GM12878 (cell line): ENCODE measurements at regions of chr9 and their contacts with region 1.

Region 1: DNA sequence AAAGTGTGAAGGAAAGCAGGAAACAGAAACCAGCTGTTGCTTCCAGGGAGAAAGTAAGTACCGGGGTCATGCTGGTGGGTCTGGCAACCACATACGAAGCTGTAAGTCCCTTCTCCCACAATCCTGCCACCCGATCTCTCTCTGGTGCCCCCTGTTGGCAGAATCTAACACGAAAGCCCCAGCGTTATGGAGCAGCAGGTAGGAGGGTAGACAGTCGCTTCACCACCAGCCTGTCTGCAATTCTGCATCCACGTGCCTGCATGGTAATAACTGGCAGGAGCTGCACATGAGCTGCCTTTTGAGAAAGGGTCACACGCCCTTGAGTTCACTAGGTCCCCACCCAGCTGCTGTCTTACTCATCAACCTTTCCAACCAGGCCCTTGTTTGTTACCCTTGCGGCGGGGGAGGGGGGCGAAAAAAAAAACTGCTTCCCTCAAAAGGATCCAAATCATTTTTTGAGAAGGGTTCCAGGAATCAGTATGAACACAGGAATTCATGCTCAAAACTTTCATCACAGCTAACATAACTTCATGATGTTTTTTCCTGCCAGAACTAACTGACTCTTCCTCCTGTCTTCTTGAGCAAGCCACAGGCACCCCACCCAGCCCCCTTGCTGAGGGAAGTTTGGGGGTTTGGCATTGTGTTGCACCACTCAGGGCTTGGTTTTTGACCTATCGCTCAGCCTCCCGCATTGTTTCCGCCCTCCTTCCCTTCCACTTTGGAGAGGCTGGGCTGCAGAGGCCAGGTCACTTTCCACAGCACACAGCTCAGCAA is 19.6 kb upstream of the TMEM252 start:
- DNase-seq: no peak
- ATAC-seq: peak; percentile 83
- H3K4me3 ChIP-seq: no peak overlapping the region
- H3K27ac ChIP-seq: no peak overlapping the region
- H3K4me1 ChIP-seq: no peaks in the 10 kb centered on the region
- H3K27me3 ChIP-seq: peaks cover 4 to 7% of the 10 kb centered on the region in 2 experiments; a peak in 3 of 4 replicates
- CTCF ChIP-seq: peak; percentile 51 to 72 (median 58)
- EP300 ChIP-seq: no peak
- POLR2A ChIP-seq: no peak
- RAD21 ChIP-seq: peak; percentile 54

Region 2: GRCh38 chr9:68446836-68447235 is 113.4 kb before region 1 on chr9:
- CTCF ChIA-PET with region 1: no interaction called
- POLR2A ChIA-PET with region 1: no interaction called
- RAD21 ChIA-PET with region 1: no interaction called
- SMC1A ChIA-PET with region 1: no interaction called
- in situ Hi-C with region 1: no loop called
- intact Hi-C with region 1: loop called (anchors 10 kb)
- DNase-seq: no peak
- ATAC-seq: no peak
- H3K4me3 ChIP-seq: no peak overlapping the region
- H3K27ac ChIP-seq: no peak overlapping the region
- H3K4me1 ChIP-seq: no peaks in the 10 kb centered on the region
- H3K27me3 ChIP-seq: no peaks in the 10 kb centered on the region; a peak in 1 of 4 replicates
- CTCF ChIP-seq: no peak
- EP300 ChIP-seq: no peak
- POLR2A ChIP-seq: no peak
- RAD21 ChIP-seq: no peak

Region 3: DNA sequence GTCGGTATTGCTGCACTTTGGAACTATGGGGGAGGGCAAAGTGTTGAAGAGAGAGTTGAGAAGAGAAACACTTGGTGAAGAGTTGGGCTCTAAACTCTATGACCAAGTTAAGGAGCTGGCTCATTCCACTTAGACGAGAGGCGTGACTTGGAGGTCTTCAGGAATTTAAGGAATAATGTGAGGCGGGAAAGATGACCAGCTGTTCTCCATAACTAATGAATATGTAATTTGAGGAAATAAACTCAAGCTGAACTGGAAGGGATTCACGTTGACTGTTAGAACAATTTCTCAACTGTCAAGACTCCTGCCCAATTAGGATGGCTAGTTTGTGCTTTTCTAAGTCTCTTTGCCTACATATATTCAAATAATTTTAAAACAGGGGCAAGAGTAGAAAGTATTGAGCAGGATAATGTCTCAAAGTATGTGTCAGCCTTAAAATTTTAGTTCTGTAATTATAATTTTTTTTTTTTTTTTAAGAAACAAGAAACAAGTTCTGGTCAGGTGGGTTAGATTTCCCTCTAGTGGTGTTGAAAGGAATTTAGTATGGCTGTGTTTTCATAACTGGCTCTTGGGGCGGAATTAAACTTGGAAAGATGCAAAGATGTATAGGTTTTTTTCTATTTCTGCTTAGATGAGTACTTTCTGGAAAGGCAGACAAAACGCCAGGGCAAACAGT is 53.0 kb before region 1 on chr9:
- CTCF ChIA-PET with region 1: interaction called, 6 read pairs
- POLR2A ChIA-PET with region 1: no interaction called
- RAD21 ChIA-PET with region 1: interaction called, 4 read pairs
- SMC1A ChIA-PET with region 1: interaction called, 4 read pairs
- in situ Hi-C with region 1: loop called (anchors 5 kb)
- intact Hi-C with region 1: loop called (anchors 5 kb)
- DNase-seq: no peak
- ATAC-seq: peak; percentile 39; the same call in 2 of the 3 replicates
- H3K4me3 ChIP-seq: no peak overlapping the region
- H3K27ac ChIP-seq: no peak overlapping the region
- H3K4me1 ChIP-seq: peaks cover 3% of the 10 kb centered on the region; the same call in 1 of the 2 replicates
- H3K27me3 ChIP-seq: no peaks in the 10 kb centered on the region; a peak in 1 of 4 replicates
- CTCF ChIP-seq: peak; percentile 36 to 53 (median 50); a peak in 5 of 6 replicates
- EP300 ChIP-seq: no peak
- POLR2A ChIP-seq: no peak
- RAD21 ChIP-seq: peak; percentile 52

Region 4: DNA sequence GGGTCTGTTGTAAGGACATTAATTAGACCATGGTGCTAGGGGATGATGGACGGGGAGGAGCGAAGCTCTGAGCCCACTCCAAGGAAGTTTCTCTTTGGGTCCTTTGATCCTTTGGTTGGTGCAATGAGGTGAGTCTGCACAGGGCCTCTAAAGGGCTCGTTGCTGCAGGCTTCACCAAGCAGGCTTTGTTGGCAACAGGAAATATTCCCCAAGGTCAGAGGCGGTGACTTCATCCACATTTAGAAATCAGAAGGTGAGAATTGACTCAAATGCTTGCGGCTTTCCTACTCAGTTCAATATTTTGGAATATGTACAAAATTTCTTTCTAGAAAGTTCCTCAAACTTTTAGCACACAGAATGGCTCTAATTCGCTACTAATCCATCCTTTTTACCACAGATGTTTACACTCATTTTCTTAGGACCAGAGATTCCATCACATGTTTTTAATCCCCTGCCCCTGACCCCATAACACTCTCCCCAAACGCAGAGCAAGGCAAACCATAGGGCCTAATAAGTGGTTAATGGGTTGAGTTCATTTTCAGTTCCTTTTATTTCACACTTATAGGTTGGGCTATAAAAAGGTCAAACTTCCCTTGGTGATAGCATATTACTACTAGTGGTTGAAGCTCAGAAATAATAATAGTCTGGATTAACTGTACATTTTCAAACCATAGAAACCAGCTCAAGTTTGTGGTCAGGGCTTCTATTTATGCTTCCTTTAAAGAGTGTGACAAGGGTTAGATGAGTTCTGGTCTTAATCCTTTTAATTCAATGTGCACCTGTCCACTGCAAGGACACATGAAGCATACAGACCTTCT is 17.7 kb after region 1 on chr9:
- CTCF ChIA-PET with region 1: interaction called, 60 read pairs
- POLR2A ChIA-PET with region 1: interaction called, 3 read pairs
- RAD21 ChIA-PET with region 1: no interaction called
- SMC1A ChIA-PET with region 1: interaction called, 3 read pairs
- in situ Hi-C with region 1: no loop called
- intact Hi-C with region 1: no loop called
- DNase-seq: peak; percentile 68
- ATAC-seq: peak; percentile 94
- H3K4me3 ChIP-seq: 0 out of 2 replicates have a peak overlapping the region, but pooled peaks have one; percentile 3
- H3K27ac ChIP-seq: peak overlapping the region; percentile 33; the same call in 1 of the 2 replicates
- H3K4me1 ChIP-seq: peaks cover 26% of the 10 kb centered on the region
- H3K27me3 ChIP-seq: no peaks in the 10 kb centered on the region
- CTCF ChIP-seq: no peak
- EP300 ChIP-seq: peak in 1 of 2 experiments; percentile 58
- POLR2A ChIP-seq: no peak
- RAD21 ChIP-seq: no peak